GM18951 (cell line): ENCODE measurements at regions of chr2 and their contacts with region 1.

Region 1: DNA sequence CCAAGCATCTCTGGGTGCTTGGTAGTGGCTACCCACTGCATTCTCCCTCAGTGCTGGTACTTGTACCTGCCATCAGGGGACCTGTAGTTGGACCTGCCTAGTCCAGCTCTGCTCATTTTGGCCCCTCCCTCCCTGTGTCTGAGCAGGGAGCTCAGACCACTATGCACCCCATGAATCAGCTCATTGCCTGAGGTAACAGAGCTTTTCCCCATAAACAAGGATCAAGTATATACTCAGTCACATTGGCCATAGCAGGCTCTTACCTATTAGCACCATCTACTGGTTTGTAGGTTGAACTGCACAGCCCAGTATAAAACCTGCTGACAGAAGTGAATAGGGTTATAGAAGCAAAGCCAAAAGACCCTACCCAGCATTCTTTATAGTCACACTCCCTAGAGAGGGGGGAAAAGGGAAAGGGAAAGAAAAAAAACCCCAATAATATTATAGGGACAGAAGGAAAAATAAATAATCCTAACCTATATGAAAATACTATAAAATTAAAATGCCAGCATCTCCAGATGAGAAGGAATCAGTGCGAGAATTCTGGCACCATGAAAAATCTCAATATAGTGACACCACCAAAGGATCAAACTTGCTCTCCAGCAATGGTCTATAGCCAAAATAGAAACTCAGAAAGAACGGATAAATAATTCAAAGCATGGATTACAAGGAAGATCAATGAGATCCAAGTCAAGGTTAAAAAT is 6.9 kb upstream of the FLACC1 start:
- POLR2A ChIP-seq: no peak

Region 2: GRCh38 chr2:201242571-201243277 is 121.3 kb before region 1 on chr2:
- in situ Hi-C with region 1: loop called (anchors 10 kb)
- POLR2A ChIP-seq: no peak